Psoas muscle (tissue), 8 donors: ENCODE measurements at regions of chr1 and their contacts with region 1.

Region 1: DNA sequence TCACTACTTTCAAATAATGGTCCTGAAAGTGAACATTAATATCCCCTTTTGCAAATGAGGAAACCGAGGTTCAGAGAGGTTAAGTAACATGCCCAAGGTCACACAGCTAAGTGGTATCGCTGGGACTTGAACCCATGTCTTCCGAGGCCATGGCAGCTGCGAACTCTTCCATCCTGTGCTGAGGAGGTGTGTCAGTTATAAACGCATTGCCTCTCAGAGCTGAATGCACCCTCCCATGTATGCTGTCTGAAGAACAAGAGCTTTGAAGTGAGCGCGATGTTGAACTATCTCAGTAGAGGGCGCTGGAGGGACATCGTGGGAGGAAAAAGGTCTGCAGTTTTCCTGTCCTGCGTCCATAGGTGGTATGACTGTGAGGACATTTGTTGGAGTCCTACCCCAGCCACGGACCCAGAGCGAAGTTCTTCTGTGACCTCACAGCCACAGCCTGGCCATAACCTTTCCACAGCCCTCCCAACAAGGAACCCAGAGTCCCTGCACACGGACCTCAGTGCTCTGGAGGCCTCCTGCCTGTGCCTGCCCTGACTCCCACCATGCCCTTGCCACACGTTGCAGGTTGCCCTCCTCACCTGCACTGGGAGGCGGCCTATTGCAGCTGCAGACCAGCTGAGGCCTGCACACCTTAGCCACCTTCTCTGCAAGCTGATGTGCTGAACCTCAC is 7.5 kb downstream of the MYOC start:
- DNase-seq: peak; percentile 70 to 81
- ATAC-seq: peak; percentile 88 to 91 (median 90)
- H3K4me3 ChIP-seq: peak overlapping the region; percentile 43
- H3K27ac ChIP-seq: peak overlapping the region; percentile 68
- H3K4me1 ChIP-seq: peaks cover 15% of the 10 kb centered on the region
- H3K27me3 ChIP-seq: no peaks in the 10 kb centered on the region
- CTCF ChIP-seq: peak; percentile 82

Region 2: DNA sequence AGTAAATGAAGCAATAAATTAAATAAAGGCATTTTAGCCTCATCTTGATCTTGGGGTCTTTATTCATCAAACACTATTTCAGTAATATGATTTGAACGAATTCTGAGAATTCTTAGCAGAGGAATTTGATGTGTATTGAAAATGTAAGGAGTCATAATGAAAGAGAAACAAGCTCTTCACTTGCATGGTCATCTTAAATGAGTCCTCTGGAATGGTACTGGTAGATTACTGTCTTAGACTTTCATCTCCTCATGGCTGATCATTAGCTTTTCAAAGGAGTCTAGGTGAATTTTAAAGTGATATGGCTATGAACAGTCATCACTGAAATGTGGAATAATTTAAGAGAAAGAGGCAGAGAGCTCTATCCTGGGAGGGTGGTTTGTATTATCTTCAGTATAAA is 129.6 kb before region 1 on chr1:
- intact Hi-C with region 1: no loop called
- DNase-seq: no peak
- ATAC-seq: no peak
- H3K4me3 ChIP-seq: no peak overlapping the region
- H3K27ac ChIP-seq: no peak overlapping the region
- H3K4me1 ChIP-seq: peaks cover 9% of the 10 kb centered on the region
- H3K27me3 ChIP-seq: no peaks in the 10 kb centered on the region
- CTCF ChIP-seq: no peak

Region 3: GRCh38 chr1:171715813-171716251 is 70.9 kb after region 1 on chr1:
- intact Hi-C with region 1: loop called in 1 of 2 experiments (anchors 1 kb)
- DNase-seq: no peak
- ATAC-seq: peak in 1 of 4 donors; percentile 6
- H3K4me3 ChIP-seq: no peak overlapping the region
- H3K27ac ChIP-seq: peak overlapping the region; percentile 73
- H3K4me1 ChIP-seq: peaks cover 23% of the 10 kb centered on the region
- H3K27me3 ChIP-seq: no peaks in the 10 kb centered on the region
- CTCF ChIP-seq: peak; percentile 45

Region 4: GRCh38 chr1:171741872-171742576 is 97.1 kb after region 1 on chr1 and contains the start of gene VAMP4:
- intact Hi-C with region 1: loop called (anchors 10 kb)
- DNase-seq: peak; percentile 90 to 94
- ATAC-seq: peak; percentile 88 to 91 (median 89)
- H3K4me3 ChIP-seq: peak within 1 kb of the TSS; percentile 79
- H3K27ac ChIP-seq: peak within 1 kb of the TSS; percentile 98
- H3K4me1 ChIP-seq: peaks cover 35% of the 10 kb centered on the region
- H3K27me3 ChIP-seq: no peaks in the 10 kb centered on the region
- CTCF ChIP-seq: no peak
- total RNA-seq, gene VAMP4: 5.7 to 10.3 (median 7.9) TPM

Region 5: GRCh38 chr1:171781176-171781875 is 136.4 kb after region 1 on chr1 and contains the start of gene METTL13:
- intact Hi-C with region 1: loop called (anchors 2 to 5 kb)
- DNase-seq: peak; percentile 99
- ATAC-seq: peak; percentile 98 to 100 (median 99)
- H3K4me3 ChIP-seq: peak within 1 kb of the TSS; percentile 92
- H3K27ac ChIP-seq: peak within 1 kb of the TSS; percentile 91
- H3K4me1 ChIP-seq: peaks cover 26% of the 10 kb centered on the region
- H3K27me3 ChIP-seq: no peaks in the 10 kb centered on the region
- CTCF ChIP-seq: no peak
- total RNA-seq, gene METTL13: 19.0 to 26.8 (median 23.1) TPM

Region 6: GRCh38 chr1:171984850-171985485 is 340.0 kb after region 1 on chr1:
- intact Hi-C with region 1: loop called (anchors 2 to 5 kb)
- DNase-seq: no peak
- ATAC-seq: peak in 1 of 4 donors; percentile 83
- H3K4me3 ChIP-seq: no peak overlapping the region
- H3K27ac ChIP-seq: no peak overlapping the region
- H3K4me1 ChIP-seq: peaks cover 6% of the 10 kb centered on the region
- H3K27me3 ChIP-seq: no peaks in the 10 kb centered on the region
- CTCF ChIP-seq: peak; percentile 82